Natural killer cell (primary cell): ENCODE measurements at regions of chr6 and their contacts with region 1.

Region 1: DNA sequence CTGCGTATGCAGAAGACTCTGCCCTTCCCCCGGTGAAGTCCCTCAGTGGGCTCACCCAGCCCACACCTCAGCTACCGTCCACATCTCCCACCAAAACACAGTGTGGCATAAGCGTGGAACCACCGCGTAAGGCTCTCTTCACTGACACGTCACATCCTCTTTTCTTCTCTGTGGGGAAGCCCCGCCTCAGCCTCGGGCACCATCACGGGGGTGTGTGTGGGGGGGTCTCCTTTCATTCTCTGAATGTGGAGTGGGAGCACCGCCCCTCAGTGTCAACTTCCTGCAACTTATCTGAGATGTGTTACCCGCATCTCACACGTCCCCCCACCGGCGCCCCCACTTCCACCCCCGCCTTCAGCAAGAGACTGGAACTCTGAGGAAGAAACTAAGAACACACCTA is 388.4 kb upstream of the JARID2 start:
- DNase-seq: peak; percentile 88 to 92
- ATAC-seq: peak; percentile 94 to 98 (median 95)
- H3K4me3 ChIP-seq: peak overlapping the region; percentile 4
- H3K4me3 Mint-ChIP-seq: peak overlapping the region; percentile 94
- H3K27ac ChIP-seq: peak overlapping the region; percentile 78
- H3K27ac Mint-ChIP-seq: peak overlapping the region; percentile 100
- H3K4me1 ChIP-seq: peaks cover 36% of the 10 kb centered on the region
- H3K4me1 Mint-ChIP-seq: peaks cover 52 to 65% of the 10 kb centered on the region in 2 donors
- H3K27me3 ChIP-seq: no peaks in the 10 kb centered on the region
- H3K27me3 Mint-ChIP-seq: no peaks in the 10 kb centered on the region
- CTCF ChIP-seq: no peak

Region 2: GRCh38 chr6:14734416-14735340 is 122.8 kb before region 1 on chr6:
- intact Hi-C with region 1: loop called (anchors 5 kb)
- DNase-seq: peak in 1 of 2 donors; percentile 71
- ATAC-seq: peak; percentile 79 to 91 (median 83)
- H3K4me3 ChIP-seq: no peak overlapping the region
- H3K4me3 Mint-ChIP-seq: peak overlapping the region; percentile 80
- H3K27ac ChIP-seq: peak overlapping the region; percentile 64
- H3K27ac Mint-ChIP-seq: peak overlapping the region; percentile 79 to 91
- H3K4me1 ChIP-seq: peaks cover 46% of the 10 kb centered on the region
- H3K4me1 Mint-ChIP-seq: peaks cover 70 to 74% of the 10 kb centered on the region in 2 donors
- H3K27me3 ChIP-seq: no peaks in the 10 kb centered on the region
- H3K27me3 Mint-ChIP-seq: no peaks in the 10 kb centered on the region
- CTCF ChIP-seq: no peak

Region 3: DNA sequence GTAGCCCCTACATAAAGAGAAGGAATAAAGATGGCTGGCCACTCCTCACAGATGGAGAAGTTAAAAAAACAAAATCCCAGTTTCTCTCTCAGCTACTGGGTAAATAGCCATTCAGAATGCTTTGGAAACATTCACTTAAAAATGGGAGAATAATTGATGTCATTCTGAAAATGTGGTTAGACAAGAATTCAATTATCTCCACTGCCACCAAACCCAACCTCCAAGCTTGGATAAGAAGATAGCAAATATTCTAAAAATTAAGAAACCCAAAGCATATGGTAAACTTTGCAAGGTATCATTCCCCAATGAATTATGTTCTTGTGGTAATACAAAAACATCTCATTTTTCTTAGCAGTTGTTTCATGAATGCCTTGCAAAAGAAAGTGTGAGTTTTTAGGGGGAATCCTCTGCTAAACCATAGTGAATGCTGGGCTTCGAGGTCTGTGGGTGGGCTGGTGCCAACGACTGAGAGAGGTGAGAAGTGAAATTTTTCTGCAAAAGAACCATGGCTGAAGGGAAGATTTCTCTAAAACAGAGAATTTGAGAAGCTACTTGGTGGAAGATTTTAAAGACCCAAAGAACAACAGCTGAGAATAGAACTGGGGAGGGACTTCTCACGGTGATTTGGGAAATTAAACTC is 109.5 kb before region 1 on chr6:
- intact Hi-C with region 1: loop called (anchors 2 kb)
- DNase-seq: peak in 1 of 2 donors; percentile 21
- ATAC-seq: peak; percentile 64 to 93 (median 69)
- H3K4me3 ChIP-seq: no peak overlapping the region
- H3K4me3 Mint-ChIP-seq: peak overlapping the region; percentile 69
- H3K27ac ChIP-seq: no peak overlapping the region
- H3K27ac Mint-ChIP-seq: peak overlapping the region; percentile 22 to 47
- H3K4me1 ChIP-seq: peaks cover 24% of the 10 kb centered on the region
- H3K4me1 Mint-ChIP-seq: peaks cover 48 to 51% of the 10 kb centered on the region in 2 donors
- H3K27me3 ChIP-seq: peaks cover 3% of the 10 kb centered on the region
- H3K27me3 Mint-ChIP-seq: peaks cover 9 to 19% of the 10 kb centered on the region in 2 donors
- CTCF ChIP-seq: no peak

Region 4: GRCh38 chr6:14876778-14877613 is 19.5 kb after region 1 on chr6:
- intact Hi-C with region 1: loop called (anchors 1 kb)
- DNase-seq: peak in 1 of 2 donors; percentile 76
- ATAC-seq: peak; percentile 83 to 90 (median 85)
- H3K4me3 ChIP-seq: no peak overlapping the region
- H3K4me3 Mint-ChIP-seq: peak overlapping the region; percentile 73
- H3K27ac ChIP-seq: peak overlapping the region; percentile 56
- H3K27ac Mint-ChIP-seq: peak overlapping the region; percentile 79 to 86
- H3K4me1 ChIP-seq: peaks cover 16% of the 10 kb centered on the region
- H3K4me1 Mint-ChIP-seq: peaks cover 26 to 34% of the 10 kb centered on the region in 2 donors
- H3K27me3 ChIP-seq: no peaks in the 10 kb centered on the region
- H3K27me3 Mint-ChIP-seq: no peaks in the 10 kb centered on the region
- CTCF ChIP-seq: no peak